PC-9 (cell line): ENCODE measurements at regions of chr6 and their contacts with region 1.

Region 1: DNA sequence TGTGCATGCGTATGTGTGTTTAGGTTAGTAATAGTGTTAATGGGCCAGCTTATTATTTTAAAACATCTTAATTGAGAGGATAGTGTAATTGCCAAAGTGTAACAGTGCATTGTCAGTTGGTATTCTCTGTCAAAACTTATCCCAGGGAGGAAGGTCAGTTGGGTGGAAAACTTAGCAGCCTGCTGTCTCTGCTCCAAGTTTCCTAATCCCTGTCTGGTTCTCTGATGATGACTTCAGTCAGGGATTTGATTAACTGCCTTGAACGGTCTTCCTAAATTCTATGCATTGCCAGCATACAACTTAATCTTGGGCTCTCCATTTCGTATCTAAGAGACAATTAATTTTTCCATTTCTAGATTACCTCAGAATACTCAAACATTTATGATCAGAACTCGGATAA is 51.1 kb downstream of the L3MBTL3 start:
- DNase-seq: no peak
- H3K4me3 ChIP-seq: no peak overlapping the region
- H3K27ac ChIP-seq: no peak overlapping the region
- H3K4me1 ChIP-seq: no peaks in the 10 kb centered on the region
- H3K27me3 ChIP-seq: no peaks in the 10 kb centered on the region
- CTCF ChIP-seq: no peak

Region 2: GRCh38 chr6:129345890-129346289 is 723.6 kb before region 1 on chr6:
- CTCF ChIA-PET with region 1: no interaction called
- POLR2A ChIA-PET with region 1: no interaction called
- intact Hi-C with region 1: no loop called
- DNase-seq: no peak
- H3K4me3 ChIP-seq: no peak overlapping the region
- H3K27ac ChIP-seq: no peak overlapping the region
- H3K4me1 ChIP-seq: no peaks in the 10 kb centered on the region
- H3K27me3 ChIP-seq: no peaks in the 10 kb centered on the region
- CTCF ChIP-seq: no peak

Region 3: DNA sequence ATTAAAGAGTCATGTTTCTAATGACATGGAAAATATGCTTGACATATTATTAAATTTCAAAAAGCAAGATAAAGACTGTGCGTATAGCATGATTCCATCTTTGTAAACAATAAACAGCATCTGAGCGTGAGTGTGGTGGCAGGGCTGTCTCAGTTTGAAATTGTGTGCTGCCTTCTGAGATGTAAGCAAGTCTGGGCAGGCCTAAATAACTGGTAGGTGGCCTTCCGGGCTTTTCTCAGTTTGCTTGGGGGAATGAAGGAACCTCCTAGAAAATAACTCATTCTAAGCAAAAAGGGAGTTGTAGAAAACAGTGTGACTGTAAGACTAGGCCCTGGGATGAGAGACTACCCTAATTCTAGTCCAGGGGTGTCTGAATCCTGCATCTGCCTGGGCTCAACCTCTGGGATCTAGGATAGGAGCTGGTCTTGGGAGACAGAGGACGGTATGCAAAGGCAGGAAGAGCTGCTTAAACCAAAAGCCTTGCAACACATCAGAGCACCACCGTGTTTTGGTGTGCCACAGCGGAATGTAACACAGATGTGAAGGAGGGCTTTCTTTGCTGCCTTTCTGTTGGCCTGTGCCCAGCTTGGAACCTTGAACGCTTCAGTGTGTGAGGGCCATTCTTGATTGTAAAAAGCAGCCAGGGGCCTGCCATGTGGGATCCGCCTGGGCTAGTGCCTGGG is 114.6 kb before region 1 on chr6:
- CTCF ChIA-PET with region 1: no interaction called
- POLR2A ChIA-PET with region 1: no interaction called
- intact Hi-C with region 1: no loop called
- DNase-seq: no peak
- H3K4me3 ChIP-seq: no peak overlapping the region
- H3K27ac ChIP-seq: no peak overlapping the region
- H3K4me1 ChIP-seq: no peaks in the 10 kb centered on the region
- H3K27me3 ChIP-seq: no peaks in the 10 kb centered on the region
- CTCF ChIP-seq: no peak

Region 4: GRCh38 chr6:130843575-130844320 is 774.3 kb after region 1 on chr6:
- CTCF ChIA-PET with region 1: no interaction called
- POLR2A ChIA-PET with region 1: no interaction called
- intact Hi-C with region 1: loop called (anchors 10 kb)
- DNase-seq: no peak
- H3K4me3 ChIP-seq: no peak overlapping the region
- H3K27ac ChIP-seq: no peak overlapping the region
- H3K4me1 ChIP-seq: no peaks in the 10 kb centered on the region
- H3K27me3 ChIP-seq: no peaks in the 10 kb centered on the region
- CTCF ChIP-seq: peak; percentile 82